A549 (cell line): ENCODE measurements at regions of chr14 and their contacts with region 1.

Region 1: DNA sequence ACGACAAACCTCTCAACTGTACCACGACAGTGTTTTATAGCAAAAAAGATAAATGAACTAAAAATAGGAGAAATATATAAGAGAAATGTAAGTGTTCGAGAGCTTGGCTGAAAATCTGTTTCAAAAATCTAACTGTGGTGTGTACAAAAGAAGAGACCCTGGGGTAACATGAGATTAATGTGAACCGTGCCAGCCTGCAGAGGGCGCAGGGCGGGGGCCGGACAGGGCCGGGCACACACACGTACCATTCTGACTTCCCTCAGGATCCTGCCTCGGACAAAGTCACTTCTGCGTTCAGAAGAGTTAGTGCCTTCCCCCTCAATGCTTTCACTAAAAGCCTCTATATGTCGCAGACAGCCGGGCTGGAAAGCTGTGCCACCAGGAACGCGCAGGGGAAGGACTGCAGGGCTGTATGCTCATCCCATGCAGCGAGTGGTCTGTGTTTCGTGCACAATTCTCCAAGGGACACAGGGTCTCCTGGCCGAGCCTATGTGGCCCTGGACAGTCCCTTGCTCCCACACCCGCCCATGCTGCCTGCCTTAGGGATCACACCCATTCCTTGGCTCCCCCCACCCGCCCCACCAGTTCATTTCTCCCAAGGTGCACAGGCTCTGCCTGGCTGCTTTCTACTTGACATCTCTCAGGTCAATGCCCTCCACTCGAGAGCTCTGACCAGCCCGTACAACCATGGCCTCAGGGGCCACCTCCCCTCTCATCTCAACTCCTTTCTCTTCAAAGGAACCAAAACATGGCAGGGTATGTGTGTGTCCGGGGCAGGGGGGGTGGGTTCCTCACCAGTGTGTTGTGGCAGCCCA is 8.5 kb downstream of the CDCA4 start:
- DNase-seq: peak; percentile 49 to 66
- ATAC-seq: peak; percentile 86 to 90
- H3K4me3 ChIP-seq: no peak overlapping the region
- H3K27ac ChIP-seq: peak overlapping the region in 1 of 2 experiments; percentile 24; a peak in 1 of 6 replicates
- H3K4me1 ChIP-seq: peaks cover 50% of the 10 kb centered on the region
- CTCF ChIP-seq: peak; percentile 73
- EP300 ChIP-seq: no peak
- POLR2A ChIP-seq: no peak
- RAD21 ChIP-seq: peak; percentile 53 to 61

Region 2: DNA sequence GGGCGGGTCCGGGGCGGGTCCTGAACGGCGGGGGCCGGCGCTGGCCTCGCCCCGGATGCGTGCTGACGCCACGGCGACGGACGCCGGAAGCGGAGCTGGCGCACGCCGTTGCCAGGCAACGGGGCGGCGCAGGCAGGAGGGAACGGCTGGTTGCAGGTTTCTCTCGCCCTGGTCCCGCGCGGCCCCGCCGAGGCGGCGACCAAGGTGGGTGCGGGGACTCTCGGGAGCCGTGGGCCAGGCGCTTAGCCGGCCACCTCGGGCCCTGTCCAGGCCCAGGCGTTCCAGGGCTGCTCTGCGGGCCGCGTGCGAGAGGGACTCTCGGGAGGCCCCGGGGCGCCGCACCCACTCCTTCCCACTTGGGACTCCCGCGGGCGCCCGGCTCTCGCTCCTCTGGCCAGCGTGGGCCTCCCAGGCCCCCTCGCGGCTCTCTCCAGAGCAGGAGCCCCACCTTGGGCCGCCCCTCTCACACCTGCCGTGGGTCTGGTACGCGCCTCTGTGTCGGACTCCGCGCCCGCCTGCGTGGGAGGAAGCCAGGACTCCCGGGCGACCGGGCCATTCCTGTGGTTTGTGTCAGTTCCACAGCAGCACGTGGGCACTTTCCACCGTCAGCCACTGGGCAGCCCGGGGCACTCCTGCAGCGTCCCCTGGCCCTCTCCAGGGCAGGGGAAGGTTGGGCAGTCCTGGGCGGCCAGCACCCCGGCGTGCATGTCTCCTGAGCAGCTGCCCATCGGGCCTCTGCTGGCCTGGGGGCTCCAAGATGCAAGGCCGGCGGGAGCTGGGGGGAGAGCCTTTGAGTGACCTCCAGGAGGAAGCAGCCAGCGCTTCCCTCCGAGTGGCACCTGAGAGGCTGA is 26.5 kb before region 1 on chr14 and contains the start of gene CLBA1:
- CTCF ChIA-PET with region 1: interaction called, 14 read pairs
- POLR2A ChIA-PET with region 1: interaction called, 3 read pairs
- DNase-seq: peak; percentile 90 to 93
- ATAC-seq: peak; percentile 89 to 91
- H3K4me3 ChIP-seq: peak within 1 kb of the TSS; percentile 87
- H3K27ac ChIP-seq: peak within 1 kb of the TSS; percentile 89 to 96
- H3K4me1 ChIP-seq: peaks cover 16% of the 10 kb centered on the region; the same call in 2 of the 3 replicates
- CTCF ChIP-seq: no peak
- EP300 ChIP-seq: no peak
- POLR2A ChIP-seq: peak; percentile 55
- RAD21 ChIP-seq: no peak
- polyA plus RNA-seq, gene CLBA1: 11.3 and 11.5 TPM in 2 replicates

Region 3: DNA sequence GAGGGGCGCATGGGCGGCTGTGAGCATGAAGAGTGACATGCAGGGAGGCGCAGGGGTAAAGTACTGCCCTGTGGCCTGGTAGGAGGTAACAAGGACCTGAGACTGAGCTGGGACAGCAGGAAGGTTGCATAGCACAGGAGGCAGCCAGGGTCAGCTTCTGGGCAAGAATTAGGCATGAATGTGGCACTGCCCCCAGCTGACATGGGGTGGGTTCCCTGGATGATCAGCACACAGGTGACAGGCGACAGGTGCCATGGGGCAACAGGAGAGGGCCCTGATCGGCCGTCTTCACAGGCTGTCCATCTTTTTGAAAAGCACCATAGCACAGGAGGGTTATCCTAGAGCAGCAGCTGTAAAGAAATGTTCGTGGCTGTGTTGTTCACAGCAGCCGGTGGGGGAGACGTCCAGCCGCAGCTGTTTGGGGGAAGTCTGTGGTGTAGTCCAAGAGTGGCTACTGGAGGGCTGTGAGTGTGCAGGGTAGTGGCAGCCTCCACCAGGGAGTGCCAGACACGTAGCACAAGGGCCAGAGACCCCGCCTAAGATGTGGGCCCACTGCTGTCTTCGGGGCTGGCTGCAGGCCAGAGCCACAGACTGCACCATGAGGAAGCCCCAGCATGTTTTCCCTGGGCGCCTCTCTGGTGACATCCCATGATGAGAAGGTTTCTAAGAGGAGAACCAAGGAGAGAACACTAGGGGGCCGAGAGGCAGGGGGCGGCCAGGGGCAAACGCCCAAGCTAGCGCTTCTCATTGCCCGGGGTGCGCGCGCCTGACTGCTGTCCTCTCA is 18.4 kb before region 1 on chr14:
- CTCF ChIA-PET with region 1: interaction called, 49 read pairs
- POLR2A ChIA-PET with region 1: no interaction called
- DNase-seq: no peak
- ATAC-seq: peak; percentile 33 to 37; a peak in 3 of 6 replicates
- H3K4me3 ChIP-seq: no peak overlapping the region
- H3K27ac ChIP-seq: no peak overlapping the region
- H3K4me1 ChIP-seq: no peaks in the 10 kb centered on the region
- CTCF ChIP-seq: no peak
- EP300 ChIP-seq: no peak
- POLR2A ChIP-seq: no peak
- RAD21 ChIP-seq: no peak

Region 4: GRCh38 chr14:105026803-105027563 is 14.6 kb after region 1 on chr14:
- CTCF ChIA-PET with region 1: interaction called, 41 read pairs
- POLR2A ChIA-PET with region 1: no interaction called
- DNase-seq: peak in 1 of 2 experiments; percentile 85
- ATAC-seq: peak in 1 of 2 experiments; percentile 29; a peak in 3 of 6 replicates
- H3K4me3 ChIP-seq: no peak overlapping the region
- H3K27ac ChIP-seq: peak overlapping the region; percentile 93 to 97
- H3K4me1 ChIP-seq: peaks cover 51% of the 10 kb centered on the region
- CTCF ChIP-seq: no peak
- EP300 ChIP-seq: no peak
- POLR2A ChIP-seq: no peak
- RAD21 ChIP-seq: no peak

Region 5: GRCh38 chr14:105034314-105035039 is 22.1 kb after region 1 on chr14:
- CTCF ChIA-PET with region 1: interaction called, 41 read pairs
- POLR2A ChIA-PET with region 1: no interaction called
- DNase-seq: no peak
- ATAC-seq: no peak
- H3K4me3 ChIP-seq: no peak overlapping the region
- H3K27ac ChIP-seq: no peak overlapping the region
- H3K4me1 ChIP-seq: 0 out of 3 replicates have a peak, but pooled peaks cover 3% of the 10 kb centered on the region
- CTCF ChIP-seq: no peak
- EP300 ChIP-seq: no peak
- POLR2A ChIP-seq: no peak
- RAD21 ChIP-seq: no peak

Region 6: DNA sequence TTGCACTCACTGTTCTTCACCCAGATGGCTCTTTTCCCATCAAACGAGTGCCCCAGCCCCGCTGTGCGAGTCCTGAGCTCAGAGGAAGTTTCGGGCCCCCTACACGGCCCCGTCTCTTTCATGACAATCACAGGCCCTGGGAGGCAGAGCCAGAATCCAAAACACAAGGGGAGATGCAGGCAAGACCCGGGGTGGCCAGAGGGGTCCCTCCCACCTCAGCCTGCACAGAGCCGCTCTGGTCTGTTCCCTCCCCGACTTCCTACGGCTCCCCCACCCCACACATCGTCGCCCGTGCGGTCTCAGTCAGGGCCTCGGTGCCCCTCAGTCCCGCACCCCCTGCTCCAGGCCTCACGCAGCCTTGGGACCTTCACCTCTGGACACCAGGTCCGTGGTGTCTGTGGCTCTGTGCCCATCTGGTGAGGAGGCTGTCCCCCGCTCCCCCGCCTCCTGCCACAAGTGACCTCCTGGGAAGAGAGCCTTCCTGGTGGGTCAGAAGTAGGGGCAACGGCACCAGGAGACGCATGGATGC is 44.0 kb after region 1 on chr14:
- CTCF ChIA-PET with region 1: interaction called, 10 read pairs
- POLR2A ChIA-PET with region 1: no interaction called
- DNase-seq: no peak
- ATAC-seq: no peak
- H3K4me3 ChIP-seq: no peak overlapping the region
- H3K27ac ChIP-seq: no peak overlapping the region
- H3K4me1 ChIP-seq: no peaks in the 10 kb centered on the region
- CTCF ChIP-seq: no peak
- EP300 ChIP-seq: no peak
- POLR2A ChIP-seq: no peak
- RAD21 ChIP-seq: no peak

Region 7: GRCh38 chr14:105065280-105066228 is 53.2 kb after region 1 on chr14 and contains the start of gene GPR132:
- CTCF ChIA-PET with region 1: interaction called, 10 read pairs
- POLR2A ChIA-PET with region 1: no interaction called
- DNase-seq: no peak
- ATAC-seq: peak; percentile 23 to 37; a peak in 4 of 6 replicates
- H3K4me3 ChIP-seq: no peak within 1 kb of the TSS
- H3K27ac ChIP-seq: peak within 1 kb of the TSS in 1 of 2 experiments; percentile 67; a peak in 3 of 6 replicates
- H3K4me1 ChIP-seq: peaks cover 22% of the 10 kb centered on the region
- CTCF ChIP-seq: no peak
- EP300 ChIP-seq: no peak
- POLR2A ChIP-seq: no peak
- RAD21 ChIP-seq: no peak
- polyA plus RNA-seq, gene GPR132: 0.19 and 0.49 TPM in 2 replicates